ENCODE measurements at regions of chr21 and their contacts with region 1.

Region 1: GRCh38 chr21:31088315-31088714 is 50.0 kb upstream of the KRTAP19-8 start:
- DNase-seq: peak in 1 of 9 experiments; percentile 7
- ATAC-seq: no peak
- H3K4me3 ChIP-seq: no peak overlapping the region
- H3K4me3 Mint-ChIP-seq: no peak overlapping the region
- H3K27ac ChIP-seq: no peak overlapping the region
- H3K27ac Mint-ChIP-seq: no peak overlapping the region
- H3K4me1 ChIP-seq: no peaks in the 10 kb centered on the region
- H3K4me1 Mint-ChIP-seq: peaks cover 8% of the 10 kb centered on the region
- H3K27me3 ChIP-seq: peaks cover 0 to 2% of the 10 kb centered on the region in 2 experiments
- H3K27me3 Mint-ChIP-seq: no peaks in the 10 kb centered on the region
- CTCF ChIP-seq: no peak

Region 2: DNA sequence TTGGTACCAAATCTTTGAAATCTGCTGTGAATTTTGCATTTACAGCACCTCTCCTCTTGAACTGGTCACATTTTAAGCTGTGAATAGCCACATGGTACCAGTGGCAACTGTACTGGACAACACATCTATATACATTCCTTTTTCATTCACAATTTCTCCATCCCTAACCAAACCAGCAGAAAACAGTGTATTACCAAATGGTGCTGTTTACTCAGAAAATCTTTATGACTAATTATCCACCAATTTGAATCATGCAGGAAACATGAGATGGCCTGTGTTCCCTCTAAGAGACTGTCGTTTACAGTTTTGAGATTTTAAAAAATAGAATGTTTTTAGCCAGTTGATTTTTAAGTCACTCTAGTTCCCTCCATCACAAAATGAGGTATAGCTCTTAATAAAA is 1997.3 kb before region 1 on chr21:
- CTCF ChIA-PET with region 1: no interaction called
- POLR2A ChIA-PET with region 1: no interaction called
- intact Hi-C with region 1: loop called in 1 of 2 experiments (anchors 10 kb)
- DNase-seq: no peak
- ATAC-seq: no peak
- H3K4me3 ChIP-seq: no peak overlapping the region
- H3K4me3 Mint-ChIP-seq: no peak overlapping the region
- H3K27ac ChIP-seq: no peak overlapping the region
- H3K27ac Mint-ChIP-seq: no peak overlapping the region
- H3K4me1 ChIP-seq: no peaks in the 10 kb centered on the region
- H3K4me1 Mint-ChIP-seq: no peaks in the 10 kb centered on the region
- H3K27me3 ChIP-seq: no peaks in the 10 kb centered on the region
- H3K27me3 Mint-ChIP-seq: no peaks in the 10 kb centered on the region
- CTCF ChIP-seq: no peak

Region 3: GRCh38 chr21:30044445-30045064 is 1043.8 kb before region 1 on chr21:
- CTCF ChIA-PET with region 1: interaction called, 15 read pairs
- POLR2A ChIA-PET with region 1: interaction called, 5 read pairs
- intact Hi-C with region 1: loop called in 1 of 2 experiments (anchors 1 kb)
- DNase-seq: peak in 2 of 9 experiments; percentile 2 to 16
- ATAC-seq: no peak
- H3K4me3 ChIP-seq: no peak overlapping the region
- H3K4me3 Mint-ChIP-seq: no peak overlapping the region
- H3K27ac ChIP-seq: no peak overlapping the region
- H3K27ac Mint-ChIP-seq: no peak overlapping the region
- H3K4me1 ChIP-seq: no peaks in the 10 kb centered on the region
- H3K4me1 Mint-ChIP-seq: no peaks in the 10 kb centered on the region
- H3K27me3 ChIP-seq: no peaks in the 10 kb centered on the region
- H3K27me3 Mint-ChIP-seq: peaks cover 3% of the 10 kb centered on the region
- CTCF ChIP-seq: peak; percentile 87

Region 4: GRCh38 chr21:30831194-30831765 is 257.0 kb before region 1 on chr21:
- CTCF ChIA-PET with region 1: interaction called, 26 read pairs
- POLR2A ChIA-PET with region 1: no interaction called
- intact Hi-C with region 1: loop called (anchors 1 kb)
- DNase-seq: peak in 5 of 9 experiments; percentile 16 to 56 (median 50)
- ATAC-seq: no peak
- H3K4me3 ChIP-seq: no peak overlapping the region
- H3K4me3 Mint-ChIP-seq: no peak overlapping the region
- H3K27ac ChIP-seq: no peak overlapping the region
- H3K27ac Mint-ChIP-seq: no peak overlapping the region
- H3K4me1 ChIP-seq: no peaks in the 10 kb centered on the region
- H3K4me1 Mint-ChIP-seq: no peaks in the 10 kb centered on the region
- H3K27me3 ChIP-seq: peaks cover 0 to 3% of the 10 kb centered on the region in 2 experiments
- H3K27me3 Mint-ChIP-seq: peaks cover 16% of the 10 kb centered on the region
- CTCF ChIP-seq: peak; percentile 63

Region 5: DNA sequence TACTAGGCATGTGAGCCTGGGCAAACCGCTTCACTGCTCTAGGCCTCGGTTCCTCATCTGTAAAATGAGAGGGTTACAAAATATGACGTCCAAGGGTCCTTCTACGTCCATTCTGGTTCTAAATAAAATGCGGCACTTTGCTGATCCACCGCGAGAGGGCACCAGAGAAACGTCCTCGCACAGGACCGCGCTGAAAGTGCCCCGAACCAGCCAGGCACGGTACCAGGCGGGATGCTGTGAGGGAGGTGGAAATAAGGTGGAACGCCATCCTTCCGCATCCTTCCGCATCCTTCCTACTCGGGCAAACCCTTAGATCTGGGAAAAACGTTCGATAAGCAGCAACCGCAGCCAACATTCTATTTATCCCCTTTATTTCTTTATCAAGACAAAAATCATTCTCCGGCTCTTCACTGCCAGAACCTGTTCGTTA is 10.3 kb after region 1 on chr21:
- CTCF ChIA-PET with region 1: interaction called, 10 read pairs
- POLR2A ChIA-PET with region 1: no interaction called
- intact Hi-C with region 1: no loop called
- DNase-seq: peak; percentile 54 to 85 (median 73)
- ATAC-seq: peak; percentile 78
- H3K4me3 ChIP-seq: no peak overlapping the region
- H3K4me3 Mint-ChIP-seq: no peak overlapping the region
- H3K27ac ChIP-seq: no peak overlapping the region
- H3K27ac Mint-ChIP-seq: no peak overlapping the region
- H3K4me1 ChIP-seq: no peaks in the 10 kb centered on the region
- H3K4me1 Mint-ChIP-seq: peaks cover 22% of the 10 kb centered on the region
- H3K27me3 ChIP-seq: no peaks in the 10 kb centered on the region
- H3K27me3 Mint-ChIP-seq: no peaks in the 10 kb centered on the region
- CTCF ChIP-seq: peak; percentile 90

Region 6: GRCh38 chr21:31142600-31142999 is 54.3 kb after region 1 on chr21:
- CTCF ChIA-PET with region 1: no interaction called
- POLR2A ChIA-PET with region 1: no interaction called
- intact Hi-C with region 1: no loop called
- DNase-seq: peak in 6 of 9 experiments; percentile 41 to 65 (median 54)
- ATAC-seq: peak; percentile 86
- H3K4me3 ChIP-seq: no peak overlapping the region
- H3K4me3 Mint-ChIP-seq: no peak overlapping the region
- H3K27ac ChIP-seq: no peak overlapping the region
- H3K27ac Mint-ChIP-seq: no peak overlapping the region
- H3K4me1 ChIP-seq: peaks cover 7% of the 10 kb centered on the region
- H3K4me1 Mint-ChIP-seq: peaks cover 18% of the 10 kb centered on the region
- H3K27me3 ChIP-seq: no peaks in the 10 kb centered on the region
- H3K27me3 Mint-ChIP-seq: no peaks in the 10 kb centered on the region
- CTCF ChIP-seq: peak; percentile 15